ENCODE measurements at regions of chr1 and their contacts with region 1.

Region 1: GRCh38 chr1:21232044-21232443 is 55.3 kb upstream of the EIF4G3 start:
- DNase-seq: peak; percentile 67
- H3K4me3 ChIP-seq: no peak overlapping the region
- H3K27ac ChIP-seq: no peak overlapping the region
- H3K4me1 ChIP-seq: no peaks in the 10 kb centered on the region
- H3K27me3 ChIP-seq: no peaks in the 10 kb centered on the region
- CTCF ChIP-seq: peak; percentile 68 to 73
- POLR2A ChIP-seq: no peak

Region 2: GRCh38 chr1:21012937-21013336 is 219.1 kb before region 1 on chr1:
- CTCF ChIA-PET with region 1: no interaction called
- POLR2A ChIA-PET with region 1: no interaction called
- dilution Hi-C with region 1: no loop called
- intact Hi-C with region 1: no loop called
- DNase-seq: no peak
- H3K4me3 ChIP-seq: no peak overlapping the region
- H3K27ac ChIP-seq: no peak overlapping the region
- H3K4me1 ChIP-seq: no peaks in the 10 kb centered on the region
- H3K27me3 ChIP-seq: no peaks in the 10 kb centered on the region
- CTCF ChIP-seq: no peak
- POLR2A ChIP-seq: no peak

Region 3: DNA sequence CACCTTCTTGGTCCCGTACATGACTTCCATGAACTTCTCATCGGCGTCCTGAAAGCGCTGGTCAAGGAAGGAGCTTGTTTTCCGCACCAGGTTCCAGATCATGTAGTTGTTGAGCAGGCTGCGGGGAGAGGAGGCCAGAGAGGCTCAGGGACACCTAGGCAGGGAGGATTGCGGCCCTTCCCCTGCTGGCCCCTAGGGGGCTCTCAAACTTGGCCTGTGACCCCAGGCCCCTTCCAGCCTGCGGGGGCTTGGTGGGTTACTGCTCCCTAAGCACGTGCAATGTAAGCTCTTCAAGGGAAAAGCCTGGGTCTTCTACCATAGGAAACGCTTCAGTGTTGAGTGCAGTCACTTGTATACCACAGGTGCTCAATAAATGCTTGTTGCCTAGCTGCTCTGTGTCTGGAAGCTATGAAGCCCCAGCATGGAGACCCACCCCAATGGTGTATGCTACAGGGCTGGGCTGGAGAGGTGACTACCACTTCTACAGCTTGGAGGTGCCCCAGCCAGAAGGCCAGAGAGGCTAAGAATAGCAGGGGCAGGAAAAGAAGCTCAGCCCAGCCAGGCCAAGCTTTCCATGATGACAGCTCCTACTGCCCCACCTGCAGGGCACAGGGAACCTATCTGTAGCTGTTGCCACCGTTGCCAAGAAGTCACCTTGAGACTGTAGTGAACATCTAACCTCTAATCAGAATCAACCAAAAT is 13.1 kb after region 1 on chr1:
- CTCF ChIA-PET with region 1: interaction called, 29 read pairs
- POLR2A ChIA-PET with region 1: no interaction called
- dilution Hi-C with region 1: no loop called
- intact Hi-C with region 1: no loop called
- DNase-seq: no peak
- H3K4me3 ChIP-seq: no peak overlapping the region
- H3K27ac ChIP-seq: no peak overlapping the region
- H3K4me1 ChIP-seq: no peaks in the 10 kb centered on the region
- H3K27me3 ChIP-seq: no peaks in the 10 kb centered on the region
- CTCF ChIP-seq: peak; percentile 57 to 65
- POLR2A ChIP-seq: no peak

Region 4: GRCh38 chr1:21261551-21262281 is 29.7 kb after region 1 on chr1:
- CTCF ChIA-PET with region 1: no interaction called
- POLR2A ChIA-PET with region 1: no interaction called
- dilution Hi-C with region 1: no loop called
- intact Hi-C with region 1: no loop called
- DNase-seq: peak; percentile 96
- H3K4me3 ChIP-seq: no peak overlapping the region
- H3K27ac ChIP-seq: peak overlapping the region; percentile 92
- H3K4me1 ChIP-seq: peaks cover 54% of the 10 kb centered on the region
- H3K27me3 ChIP-seq: no peaks in the 10 kb centered on the region
- CTCF ChIP-seq: no peak
- POLR2A ChIP-seq: peak; percentile 44

Measured in endothelial cell of umbilical vein (primary cell).